GM18951 (cell line): ENCODE measurements at regions of chr22 and their contacts with region 1.

Region 1: GRCh38 chr22:28600546-28601143 is 79.0 kb downstream of the TTC28 start:
- POLR2A ChIP-seq: no peak

Region 2: DNA sequence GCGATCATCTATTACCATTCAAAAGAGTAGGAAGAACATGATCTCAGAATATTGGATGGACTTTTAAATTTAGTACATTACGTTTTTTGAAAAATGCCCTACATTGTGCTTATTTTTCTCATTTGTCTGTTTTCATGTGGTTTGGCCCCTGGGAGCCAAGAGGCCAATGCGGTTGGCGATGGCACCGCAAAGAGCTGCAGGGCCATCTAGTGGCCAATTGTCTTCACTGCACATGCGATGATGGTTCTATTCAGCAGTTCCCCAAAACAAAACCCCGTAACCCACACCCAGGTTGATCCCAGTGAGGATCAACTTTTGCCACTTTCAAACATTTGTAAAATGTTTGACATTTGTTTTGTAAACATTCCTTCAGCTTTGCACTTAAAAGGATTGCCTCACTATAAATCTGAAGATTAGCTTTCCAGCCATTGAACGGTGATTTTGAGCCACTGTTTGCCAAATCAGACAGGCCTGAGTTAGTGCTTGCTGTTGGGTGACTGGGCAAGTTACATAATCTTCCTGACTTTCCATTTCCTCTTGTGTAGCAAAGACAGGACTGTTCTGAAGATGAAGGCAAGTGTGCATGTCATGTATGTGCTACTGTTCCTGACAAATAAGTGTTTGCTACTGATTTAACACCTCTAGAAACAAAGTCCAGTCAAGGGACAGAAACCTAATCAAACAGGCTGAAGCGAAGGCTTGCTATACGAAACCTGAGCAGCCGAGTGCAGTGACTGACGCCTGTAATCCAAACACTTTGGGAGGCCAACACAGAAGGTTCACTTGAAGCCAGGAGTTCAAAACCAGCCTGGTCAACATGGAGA is 228.9 kb after region 1 on chr22:
- in situ Hi-C with region 1: loop called (anchors 5 kb)
- POLR2A ChIP-seq: no peak

Region 3: GRCh38 chr22:29040385-29041275 is 440.0 kb after region 1 on chr22:
- in situ Hi-C with region 1: loop called (anchors 10 kb)
- POLR2A ChIP-seq: no peak